ENCODE measurements at regions of chr11 and their contacts with region 1.

Region 1: GRCh38 chr11:127110542-127110941 is 110.0 kb upstream of the KIRREL3 start:
- DNase-seq: no peak
- ATAC-seq: no peak

Region 2: GRCh38 chr11:127056338-127056971 is 54.1 kb before region 1 on chr11:
- intact Hi-C with region 1: loop called in 1 of 2 experiments (anchors 10 kb)
- DNase-seq: peak in 1 of 2 donors; percentile 11
- ATAC-seq: peak; percentile 53

Region 3: DNA sequence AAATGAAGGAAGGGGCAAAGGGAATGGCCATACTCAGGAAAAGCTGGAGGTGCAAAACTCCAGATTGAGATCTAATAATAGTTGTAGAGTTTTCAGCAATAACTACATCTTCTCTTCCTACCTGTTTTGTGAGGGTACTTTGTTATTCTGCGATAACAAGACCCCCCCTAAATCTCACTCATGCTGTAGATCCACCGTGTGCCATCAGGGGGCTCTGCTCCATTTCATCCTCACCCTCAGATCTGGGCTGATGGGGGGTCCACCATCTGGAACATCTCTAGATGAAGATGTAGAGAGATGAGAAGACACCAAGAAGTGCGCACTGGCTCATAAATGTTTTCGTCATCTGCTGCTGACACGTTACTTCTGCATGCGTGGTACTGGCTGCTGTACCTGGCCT is 25.9 kb after region 1 on chr11:
- intact Hi-C with region 1: no loop called
- DNase-seq: no peak
- ATAC-seq: no peak